Activated T-helper 1 cell treated with anti-CD3 and anti-CD28 coated beads, Interleukin-12 subunit alpha, Interleukin-12 subunit beta, Interleukin-2, Interleukin-4 antibody, amounts not matched to agents 30 ng/mL and 10 ng/mL and 1 ng/mL, durations not matched to agents 14 hours and 24 hours and 36 hours (primary cell): ENCODE measurements at regions of chr6 and their contacts with region 1.

Region 1: GRCh38 chr6:11496152-11497060 is 41.1 kb upstream of the TMEM170B start:
- DNase-seq: peak; percentile 72
- H3K4me3 Mint-ChIP-seq: no peak overlapping the region
- H3K27ac Mint-ChIP-seq: no peak overlapping the region
- H3K4me1 Mint-ChIP-seq: peaks cover 26% of the 10 kb centered on the region
- H3K27me3 Mint-ChIP-seq: peaks cover 3% of the 10 kb centered on the region

Region 2: DNA sequence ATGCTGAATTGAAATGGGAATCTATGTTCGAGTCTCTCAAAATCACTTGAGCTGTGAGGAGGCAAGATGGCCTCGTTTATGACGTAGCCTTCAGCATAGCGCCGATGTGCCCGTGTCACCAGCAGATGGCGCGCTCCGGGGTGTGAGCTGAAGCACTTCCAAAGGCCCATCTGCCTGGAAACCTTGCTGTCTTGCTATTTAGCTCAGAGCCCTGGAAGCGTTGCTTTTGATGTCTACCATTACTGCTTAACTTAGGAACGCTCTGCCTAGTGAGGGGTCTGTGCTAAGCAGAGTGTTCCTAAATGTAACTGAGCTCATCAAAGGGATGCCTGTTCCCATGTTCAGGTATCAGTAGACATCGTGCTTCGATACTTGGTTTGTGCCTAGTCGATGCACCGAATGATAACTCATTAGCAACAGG is 541.8 kb before region 1 on chr6:
- intact Hi-C with region 1: loop called (anchors 1 kb)
- DNase-seq: peak; percentile 50
- H3K4me3 Mint-ChIP-seq: no peak overlapping the region
- H3K27ac Mint-ChIP-seq: no peak overlapping the region
- H3K4me1 Mint-ChIP-seq: no peaks in the 10 kb centered on the region
- H3K27me3 Mint-ChIP-seq: peaks cover 7% of the 10 kb centered on the region

Region 3: GRCh38 chr6:11144393-11144851 is 352.0 kb before region 1 on chr6:
- intact Hi-C with region 1: loop called (anchors 1 kb)
- DNase-seq: peak; percentile 65
- H3K4me3 Mint-ChIP-seq: no peak overlapping the region
- H3K27ac Mint-ChIP-seq: no peak overlapping the region
- H3K4me1 Mint-ChIP-seq: peaks cover 16% of the 10 kb centered on the region
- H3K27me3 Mint-ChIP-seq: peaks cover 1% of the 10 kb centered on the region

Region 4: DNA sequence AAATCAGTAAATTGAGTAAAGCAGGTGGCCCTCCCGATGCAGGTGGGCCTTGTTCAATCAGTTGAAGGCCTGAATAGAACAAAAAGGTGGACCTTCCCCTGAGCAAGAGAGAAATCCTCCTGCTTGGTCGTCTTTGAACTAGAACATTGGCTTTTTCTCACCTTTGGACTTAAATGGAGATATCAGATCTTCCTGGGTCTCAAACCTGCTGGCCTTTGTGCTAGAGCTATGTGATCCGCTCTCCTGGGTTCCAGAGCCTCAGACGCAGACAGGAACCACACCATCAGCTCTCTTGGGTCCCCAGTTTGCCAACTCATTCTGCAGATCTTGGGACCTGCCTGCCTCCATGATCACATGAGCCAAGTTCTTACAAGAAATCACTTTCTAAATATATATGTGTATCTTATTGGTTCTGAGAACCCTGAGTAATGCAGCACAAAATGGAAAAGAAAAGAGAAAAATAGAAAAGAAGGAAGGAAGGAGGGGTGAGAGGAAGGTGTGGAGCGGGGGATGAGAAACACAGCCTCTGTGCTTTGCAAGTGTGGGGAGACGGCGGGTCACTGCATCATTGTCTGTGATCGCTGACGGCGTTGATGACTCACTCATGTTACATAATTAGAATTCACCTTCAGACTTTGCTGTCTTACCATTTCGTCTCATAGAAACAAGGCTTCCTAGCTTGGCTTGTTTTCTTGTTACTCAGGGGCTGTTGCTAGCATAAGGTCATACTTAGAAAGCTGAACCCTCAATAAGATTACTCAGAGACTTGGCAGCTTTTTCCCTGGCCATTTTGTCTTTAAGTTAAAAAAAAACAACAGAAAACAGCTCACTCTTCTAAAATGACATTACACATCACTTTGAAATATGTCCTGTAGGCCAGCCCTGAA is 178.3 kb before region 1 on chr6:
- intact Hi-C with region 1: loop called (anchors 1 kb)
- DNase-seq: peak; percentile 63
- H3K4me3 Mint-ChIP-seq: no peak overlapping the region
- H3K27ac Mint-ChIP-seq: peak overlapping the region; percentile 92
- H3K4me1 Mint-ChIP-seq: peaks cover 64% of the 10 kb centered on the region
- H3K27me3 Mint-ChIP-seq: no peaks in the 10 kb centered on the region

Region 5: DNA sequence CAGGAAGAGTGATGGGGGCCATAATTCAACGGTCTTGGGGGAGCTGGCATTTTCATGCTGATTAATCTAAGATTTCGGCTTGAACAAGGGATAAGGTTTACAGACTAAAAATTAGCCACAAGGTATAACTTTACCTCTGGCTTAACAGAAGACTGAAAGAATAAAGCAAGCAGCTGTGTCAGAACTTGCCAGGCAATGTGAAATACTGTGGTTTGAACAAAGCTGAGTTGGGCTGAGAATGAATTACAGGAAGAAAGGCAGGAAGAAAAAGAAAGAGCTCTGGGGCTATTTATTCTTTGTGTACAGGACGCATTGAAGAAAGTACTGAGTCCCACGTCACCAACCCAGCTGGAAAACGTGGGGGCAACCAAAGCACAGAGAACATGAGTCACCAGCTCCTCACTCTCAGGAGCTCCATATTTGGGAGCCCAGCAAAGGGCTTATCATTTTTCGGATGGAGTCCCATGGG is 142.5 kb before region 1 on chr6:
- intact Hi-C with region 1: loop called (anchors 1 kb)
- DNase-seq: peak; percentile 58
- H3K4me3 Mint-ChIP-seq: peak overlapping the region; percentile 74
- H3K27ac Mint-ChIP-seq: peak overlapping the region; percentile 93
- H3K4me1 Mint-ChIP-seq: peaks cover 90% of the 10 kb centered on the region
- H3K27me3 Mint-ChIP-seq: no peaks in the 10 kb centered on the region

Region 6: GRCh38 chr6:11381801-11382513 is 114.4 kb before region 1 on chr6:
- intact Hi-C with region 1: loop called (anchors 1 kb)
- DNase-seq: peak; percentile 69
- H3K4me3 Mint-ChIP-seq: peak overlapping the region; percentile 92
- H3K27ac Mint-ChIP-seq: peak overlapping the region; percentile 96
- H3K4me1 Mint-ChIP-seq: peaks cover 75% of the 10 kb centered on the region
- H3K27me3 Mint-ChIP-seq: no peaks in the 10 kb centered on the region

Region 7: DNA sequence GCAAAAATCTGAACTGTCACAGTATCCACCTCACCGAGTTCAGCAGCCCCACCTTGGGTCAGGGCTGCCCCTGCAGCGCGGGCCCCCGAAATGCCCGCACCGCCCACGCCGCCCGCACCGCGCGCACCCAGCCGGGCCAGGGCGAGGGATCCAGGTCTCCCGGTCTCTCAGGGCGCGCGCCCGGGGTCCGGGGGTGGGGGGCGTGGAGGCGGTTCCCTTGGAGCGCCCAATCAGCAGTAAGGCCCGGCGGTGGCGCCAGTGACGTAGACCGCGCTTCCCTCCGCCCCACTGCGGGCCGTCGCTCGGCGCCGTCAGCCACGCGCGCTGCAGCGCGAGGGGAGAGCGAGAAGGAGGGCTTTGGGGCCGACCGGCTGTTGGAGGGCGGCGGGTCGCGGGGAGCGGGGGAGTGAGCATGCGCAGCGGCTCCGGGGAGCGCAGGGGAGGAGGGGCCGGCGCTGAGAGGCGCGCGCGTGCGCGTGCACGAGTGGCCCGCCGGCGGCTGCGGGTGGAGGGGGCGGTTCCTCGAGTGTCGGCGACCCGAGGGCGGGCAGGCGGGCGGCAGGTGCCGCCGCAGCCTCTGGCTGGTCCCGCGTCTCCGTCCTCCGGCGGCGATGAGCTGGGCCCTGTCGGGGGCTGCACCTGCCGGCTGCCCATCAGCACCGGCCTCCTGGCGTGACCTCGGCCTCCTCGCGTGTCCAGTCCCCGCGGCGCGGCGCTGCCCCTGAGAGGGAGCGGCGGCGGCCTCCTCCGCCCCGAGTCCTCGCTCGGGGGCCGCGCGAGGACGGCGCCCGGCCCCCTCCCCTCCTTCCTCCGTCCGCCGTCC is 41.0 kb after region 1 on chr6 and contains the start of gene TMEM170B:
- intact Hi-C with region 1: loop called (anchors 2 kb)
- DNase-seq: peak; percentile 90
- H3K4me3 Mint-ChIP-seq: peak within 1 kb of the TSS; percentile 84
- H3K27ac Mint-ChIP-seq: peak within 1 kb of the TSS; percentile 68
- H3K4me1 Mint-ChIP-seq: peaks cover 17% of the 10 kb centered on the region
- H3K27me3 Mint-ChIP-seq: peaks cover 62% of the 10 kb centered on the region
- total RNA-seq, gene TMEM170B: 0.78 and 0.86 TPM in 2 replicates

Region 8: DNA sequence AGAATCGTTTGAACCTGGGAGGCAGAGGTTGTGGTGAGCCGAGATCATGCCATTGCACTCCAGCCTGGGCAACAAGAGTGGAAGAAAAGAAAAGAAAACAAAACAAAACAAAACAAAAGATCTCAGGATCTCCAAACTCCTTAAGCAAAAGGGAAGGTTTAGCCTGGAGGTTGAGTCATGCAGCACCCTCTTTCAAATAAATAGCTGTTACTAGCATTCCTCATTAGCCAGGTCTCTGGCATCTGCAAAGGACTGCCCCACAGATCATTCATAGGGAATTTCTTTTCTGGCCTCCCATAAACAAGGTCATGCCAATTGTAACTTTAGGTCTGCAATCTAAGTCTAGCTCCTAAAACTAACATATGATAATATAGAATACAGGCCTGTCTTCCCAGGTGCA is 831.0 kb after region 1 on chr6:
- intact Hi-C with region 1: no loop called
- DNase-seq: no peak
- H3K4me3 Mint-ChIP-seq: no peak overlapping the region
- H3K27ac Mint-ChIP-seq: no peak overlapping the region
- H3K4me1 Mint-ChIP-seq: no peaks in the 10 kb centered on the region
- H3K27me3 Mint-ChIP-seq: peaks cover 2% of the 10 kb centered on the region